Endothelial cell of umbilical vein (primary cell): ENCODE measurements at regions of chr14 and their contacts with region 1.

Region 1: GRCh38 chr14:91996948-91997371 is 42.9 kb downstream of the TRIP11 start:
- DNase-seq: peak; percentile 85
- H3K4me3 ChIP-seq: no peak overlapping the region
- H3K27ac ChIP-seq: peak overlapping the region; percentile 45
- H3K4me1 ChIP-seq: peaks cover 44% of the 10 kb centered on the region
- H3K27me3 ChIP-seq: no peaks in the 10 kb centered on the region
- CTCF ChIP-seq: peak; percentile 39 to 48
- POLR2A ChIP-seq: no peak

Region 2: GRCh38 chr14:91649930-91650329 is 347.0 kb before region 1 on chr14:
- CTCF ChIA-PET with region 1: interaction called, 36 read pairs
- POLR2A ChIA-PET with region 1: no interaction called
- dilution Hi-C with region 1: no loop called
- intact Hi-C with region 1: loop called (anchors 1 kb)
- DNase-seq: peak; percentile 57
- H3K4me3 ChIP-seq: no peak overlapping the region
- H3K27ac ChIP-seq: no peak overlapping the region
- H3K4me1 ChIP-seq: no peaks in the 10 kb centered on the region
- H3K27me3 ChIP-seq: no peaks in the 10 kb centered on the region
- CTCF ChIP-seq: peak in 1 of 2 donors; percentile 30
- POLR2A ChIP-seq: no peak

Region 3: GRCh38 chr14:91744068-91744483 is 252.9 kb before region 1 on chr14:
- CTCF ChIA-PET with region 1: no interaction called
- POLR2A ChIA-PET with region 1: no interaction called
- dilution Hi-C with region 1: no loop called
- intact Hi-C with region 1: no loop called
- DNase-seq: peak; percentile 37
- H3K4me3 ChIP-seq: no peak overlapping the region
- H3K27ac ChIP-seq: no peak overlapping the region
- H3K4me1 ChIP-seq: peaks cover 9% of the 10 kb centered on the region
- H3K27me3 ChIP-seq: no peaks in the 10 kb centered on the region
- CTCF ChIP-seq: no peak
- POLR2A ChIP-seq: no peak

Region 4: DNA sequence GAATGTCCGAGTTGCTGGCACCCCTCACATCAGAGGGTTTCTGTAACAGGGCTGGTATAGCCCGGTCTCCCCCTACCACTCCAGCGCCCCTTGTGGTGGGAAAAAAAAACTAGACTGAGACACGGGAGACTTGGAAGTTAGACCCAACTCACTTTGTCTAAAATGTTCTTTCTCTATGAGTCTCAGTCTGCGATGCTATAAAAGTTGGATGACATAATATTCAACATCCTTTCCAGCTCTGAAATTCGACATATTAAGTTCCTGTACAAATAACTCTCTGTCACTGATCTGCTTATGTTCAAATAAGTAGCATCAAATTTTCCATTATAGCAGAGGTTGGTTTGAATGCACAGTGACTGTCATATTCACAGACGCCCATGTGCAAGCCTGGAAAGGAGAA is 104.0 kb before region 1 on chr14:
- CTCF ChIA-PET with region 1: interaction called, 13 read pairs
- POLR2A ChIA-PET with region 1: no interaction called
- dilution Hi-C with region 1: no loop called
- intact Hi-C with region 1: no loop called
- DNase-seq: no peak
- H3K4me3 ChIP-seq: no peak overlapping the region
- H3K27ac ChIP-seq: no peak overlapping the region
- H3K4me1 ChIP-seq: no peaks in the 10 kb centered on the region
- H3K27me3 ChIP-seq: peaks cover 0 to 7% of the 10 kb centered on the region in 2 experiments
- CTCF ChIP-seq: peak; percentile 37 to 50
- POLR2A ChIP-seq: no peak

Region 5: GRCh38 chr14:91961297-91962220 is 35.4 kb before region 1 on chr14:
- CTCF ChIA-PET with region 1: interaction called, 15 read pairs
- POLR2A ChIA-PET with region 1: no interaction called
- dilution Hi-C with region 1: no loop called
- intact Hi-C with region 1: no loop called
- DNase-seq: no peak
- H3K4me3 ChIP-seq: no peak overlapping the region
- H3K27ac ChIP-seq: no peak overlapping the region
- H3K4me1 ChIP-seq: no peaks in the 10 kb centered on the region
- H3K27me3 ChIP-seq: no peaks in the 10 kb centered on the region
- CTCF ChIP-seq: no peak
- POLR2A ChIP-seq: no peak

Region 6: DNA sequence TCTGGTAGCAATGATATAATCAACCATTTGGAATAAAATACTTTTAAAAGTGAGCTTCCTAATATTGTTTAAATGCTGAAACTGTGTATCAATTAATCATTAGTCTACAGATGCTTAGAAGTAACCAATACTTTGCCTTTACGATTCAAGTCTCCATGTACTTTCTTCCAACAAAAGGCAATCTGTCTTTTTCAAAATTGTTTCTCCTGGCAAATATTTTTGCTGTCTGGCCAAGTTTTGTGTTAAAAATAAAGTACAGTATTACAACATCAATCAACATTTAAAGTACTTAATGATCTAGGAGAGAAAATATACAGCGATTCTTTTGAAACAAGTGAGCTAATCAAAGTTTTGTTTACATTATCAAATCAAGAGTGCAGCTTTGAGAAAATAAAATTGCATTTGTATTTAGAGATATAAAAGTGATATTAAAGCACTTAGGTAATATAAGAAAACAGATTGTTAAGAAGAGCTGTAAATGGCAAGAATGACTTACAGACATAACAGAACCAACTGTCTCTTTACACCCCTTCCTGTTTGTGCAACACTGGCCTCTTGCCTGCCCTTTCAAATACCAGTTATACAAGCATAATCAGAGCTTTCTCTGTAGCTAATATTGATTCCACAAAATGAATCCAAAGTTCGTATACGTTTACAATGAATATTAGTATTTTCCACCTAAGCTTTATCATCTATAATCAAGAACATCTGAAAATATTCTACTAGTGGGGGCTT is 11.3 kb before region 1 on chr14:
- CTCF ChIA-PET with region 1: interaction called, 88 read pairs
- POLR2A ChIA-PET with region 1: interaction called, 5 read pairs
- dilution Hi-C with region 1: no loop called
- intact Hi-C with region 1: loop called (anchors 1 kb)
- DNase-seq: peak; percentile 82
- H3K4me3 ChIP-seq: no peak overlapping the region
- H3K27ac ChIP-seq: peak overlapping the region; percentile 51
- H3K4me1 ChIP-seq: peaks cover 41% of the 10 kb centered on the region
- H3K27me3 ChIP-seq: no peaks in the 10 kb centered on the region
- CTCF ChIP-seq: no peak
- POLR2A ChIP-seq: no peak

Region 7: DNA sequence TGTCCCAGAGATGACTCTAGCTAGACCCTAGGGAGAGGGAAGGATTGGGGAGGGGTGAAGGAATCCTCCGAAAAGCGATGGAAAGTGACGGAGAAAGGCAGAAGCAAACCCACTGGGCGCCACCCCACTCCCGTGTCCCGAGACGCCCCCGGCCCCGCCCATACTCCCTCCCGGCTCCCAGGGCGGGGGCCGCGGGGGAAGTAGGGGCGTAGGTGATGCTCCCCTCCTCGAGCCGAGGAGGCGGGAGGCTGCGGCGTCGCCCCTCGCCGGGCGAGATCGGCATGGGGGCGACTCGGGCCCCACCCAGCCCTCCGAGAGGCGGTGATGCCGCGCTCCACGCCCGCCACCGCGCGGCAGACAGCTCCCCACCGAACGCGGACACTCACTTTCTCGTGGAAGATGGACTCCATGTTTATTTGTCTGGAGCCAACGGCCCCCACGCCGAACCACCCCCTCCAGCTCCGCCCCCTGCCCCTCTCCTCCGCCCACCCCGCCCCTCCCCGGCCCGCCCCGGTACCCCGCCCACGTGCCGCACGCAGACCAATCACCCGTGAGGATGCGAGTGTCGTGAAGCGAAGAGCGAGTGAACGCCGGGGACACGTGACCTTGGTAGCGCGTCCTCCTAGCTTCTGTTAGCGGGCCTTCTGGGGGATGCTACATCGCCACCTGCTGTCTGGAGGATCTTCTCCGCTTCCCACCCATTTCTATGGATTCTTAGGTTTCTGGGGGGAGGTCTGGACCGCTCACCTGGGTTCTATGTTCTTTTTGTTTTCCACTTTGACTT is 109.4 kb after region 1 on chr14 and contains the start of gene ATXN3:
- CTCF ChIA-PET with region 1: interaction called, 13 read pairs
- POLR2A ChIA-PET with region 1: no interaction called
- dilution Hi-C with region 1: no loop called
- intact Hi-C with region 1: no loop called
- DNase-seq: peak; percentile 96
- H3K4me3 ChIP-seq: peak within 1 kb of the TSS; percentile 63 to 90 (median 83)
- H3K27ac ChIP-seq: peak within 1 kb of the TSS; percentile 56
- H3K4me1 ChIP-seq: peaks cover 5% of the 10 kb centered on the region
- H3K27me3 ChIP-seq: peaks cover 0 to 1% of the 10 kb centered on the region in 2 experiments
- CTCF ChIP-seq: peak; percentile 69 to 89
- POLR2A ChIP-seq: peak; percentile 86
- total RNA-seq, gene ATXN3: 28.1 and 30.2 TPM in 2 replicates